OCI-LY7 (cell line): ENCODE measurements at regions of chr12 and their contacts with region 1.

Region 1: DNA sequence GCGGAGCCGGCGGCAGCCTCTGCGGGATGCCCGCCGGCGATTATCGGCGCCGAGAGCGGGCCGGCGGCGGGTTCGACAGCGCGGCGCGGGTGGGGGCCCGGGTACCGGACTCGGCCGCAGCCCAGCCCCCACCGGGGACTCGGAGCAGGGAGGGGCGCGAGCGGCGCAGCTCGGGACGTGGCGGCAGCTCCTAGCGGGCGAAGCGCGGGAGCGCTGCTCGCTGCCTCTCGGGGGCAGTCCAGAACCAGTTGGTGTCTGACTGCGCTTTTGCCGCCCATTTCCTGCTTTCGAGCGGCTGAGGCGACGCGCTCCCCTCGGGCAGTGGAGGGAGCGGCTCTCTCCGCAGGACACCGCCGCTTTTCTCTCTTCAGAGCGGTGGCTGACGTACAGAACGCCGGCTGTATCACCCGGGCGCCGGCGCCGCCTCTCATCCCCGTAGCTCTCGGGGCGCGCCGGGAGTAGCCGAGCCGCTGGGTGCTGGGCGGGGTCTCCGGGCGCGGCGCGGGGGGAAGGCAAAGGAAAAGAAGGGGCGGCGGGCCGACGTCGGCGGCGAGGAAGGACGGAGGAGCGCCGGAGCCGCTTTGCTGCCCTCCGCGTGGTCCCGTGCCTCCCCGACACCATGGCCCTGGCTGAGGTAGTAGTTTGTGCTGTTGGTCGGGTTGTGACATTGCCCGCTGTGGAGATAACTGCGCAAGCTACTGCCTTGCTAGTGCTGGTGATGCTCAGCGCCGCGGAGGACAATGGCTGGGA is 136.6 kb downstream of the MON2 start:
- DNase-seq: peak; percentile 94
- H3K4me3 ChIP-seq: peak overlapping the region; percentile 88
- H3K27ac ChIP-seq: peak overlapping the region; percentile 97
- H3K4me1 ChIP-seq: peaks cover 31% of the 10 kb centered on the region
- CTCF ChIP-seq: peak; percentile 54; the same call in 1 of the 2 replicates

Region 2: DNA sequence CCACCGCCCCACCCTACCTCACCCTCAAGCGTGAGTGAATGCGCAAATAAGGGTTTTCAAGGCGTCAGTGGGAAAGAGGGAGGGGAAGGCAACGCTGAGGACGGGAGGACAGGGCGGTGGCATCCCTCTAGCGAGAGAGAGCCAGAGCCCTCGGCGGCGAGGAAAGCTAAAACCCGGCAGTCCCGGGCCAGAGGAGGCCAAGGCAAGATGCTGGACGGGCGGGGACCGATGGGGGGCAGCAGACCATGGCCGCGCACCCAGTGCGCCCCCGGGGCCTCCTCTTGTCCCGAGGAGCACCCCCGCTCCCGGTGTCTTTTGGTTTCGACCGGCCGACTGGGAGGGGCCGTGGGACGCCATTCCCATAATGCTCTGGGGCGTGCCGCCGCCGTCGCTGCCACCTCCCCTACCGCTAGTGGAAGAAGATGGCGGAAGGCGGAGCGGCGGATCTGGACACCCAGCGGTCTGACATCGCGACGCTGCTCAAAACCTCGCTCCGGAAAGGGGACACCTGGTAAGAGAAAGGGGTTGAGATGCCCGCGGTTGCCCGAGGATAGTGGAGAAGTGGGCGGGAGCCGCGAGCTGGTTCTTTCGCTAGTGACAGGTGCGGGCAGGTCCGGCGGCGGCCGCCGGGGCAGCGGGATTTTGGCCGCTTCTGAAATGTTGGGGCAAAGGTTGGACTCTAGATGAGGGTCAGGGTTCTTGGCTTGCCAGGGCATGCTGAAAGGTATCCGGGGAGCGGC is 343.1 kb before region 1 on chr12 and contains the start of gene USP15:
- CTCF ChIA-PET with region 1: no interaction called
- POLR2A ChIA-PET with region 1: no interaction called
- intact Hi-C with region 1: loop called (anchors 1 kb)
- DNase-seq: peak; percentile 98
- H3K4me3 ChIP-seq: peak within 1 kb of the TSS; percentile 92
- H3K27ac ChIP-seq: peak within 1 kb of the TSS; percentile 90
- H3K4me1 ChIP-seq: peaks cover 41% of the 10 kb centered on the region
- CTCF ChIP-seq: peak; percentile 65
- total RNA-seq, gene USP15: 43.3 and 65.7 TPM in 2 replicates

Region 3: DNA sequence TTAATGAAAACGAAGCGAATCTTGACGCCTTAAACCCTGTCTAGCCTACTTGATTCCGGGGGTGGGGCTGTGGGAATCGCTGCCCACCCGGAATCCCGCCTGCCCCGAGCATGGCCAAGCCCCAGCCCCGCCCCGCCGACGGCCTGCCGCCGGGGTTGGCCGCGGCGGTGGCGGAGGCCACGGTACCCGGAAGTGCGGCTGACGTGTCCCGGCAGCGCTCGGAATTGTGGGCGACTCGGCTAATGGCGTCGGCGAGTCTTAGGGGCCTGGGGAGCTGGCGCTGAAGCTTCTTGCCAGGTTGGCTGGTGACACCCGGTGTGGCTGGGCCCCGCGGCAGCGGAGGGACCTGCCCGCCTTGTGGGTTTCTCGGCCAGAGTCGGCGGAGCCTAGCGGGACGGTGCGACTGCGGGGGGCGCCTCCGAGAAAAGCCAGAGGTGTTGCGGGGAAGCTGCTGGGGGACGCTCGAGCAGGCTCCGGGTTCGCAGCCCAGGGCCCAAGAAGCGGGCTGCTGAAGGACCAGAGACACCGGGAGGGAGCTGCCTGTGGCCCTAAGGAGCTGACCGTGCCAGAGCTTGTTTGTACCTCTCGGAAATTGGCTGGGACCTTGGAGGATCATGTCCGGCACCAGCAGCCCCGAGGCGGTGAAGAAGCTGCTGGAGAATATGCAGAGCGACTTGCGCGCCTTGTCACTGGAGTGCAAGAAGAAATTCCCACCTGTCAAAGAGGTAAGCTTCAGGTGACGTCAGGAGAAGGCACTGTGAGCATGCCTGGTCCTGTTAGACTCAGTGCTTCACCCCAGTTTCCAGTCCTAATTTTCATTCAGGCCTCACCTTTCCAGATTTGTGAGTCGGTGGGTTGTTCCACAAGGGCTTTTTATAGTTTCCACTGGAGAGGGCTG is 136.4 kb before region 1 on chr12 and contains the start of gene MON2:
- CTCF ChIA-PET with region 1: no interaction called
- POLR2A ChIA-PET with region 1: interaction called, 10 read pairs
- intact Hi-C with region 1: loop called (anchors 10 kb)
- DNase-seq: peak; percentile 89
- H3K4me3 ChIP-seq: peak within 1 kb of the TSS; percentile 99
- H3K27ac ChIP-seq: peak within 1 kb of the TSS; percentile 71
- H3K4me1 ChIP-seq: peaks cover 19% of the 10 kb centered on the region
- CTCF ChIP-seq: 0 out of 2 replicates have a peak, but pooled peaks have one; percentile 12
- total RNA-seq, gene MON2: 26.6 and 31.6 TPM in 2 replicates

Region 4: GRCh38 chr12:62588916-62589315 is 14.3 kb before region 1 on chr12:
- CTCF ChIA-PET with region 1: interaction called, 7 read pairs
- POLR2A ChIA-PET with region 1: interaction called, 22 read pairs
- intact Hi-C with region 1: no loop called
- DNase-seq: no peak
- H3K4me3 ChIP-seq: no peak overlapping the region
- H3K27ac ChIP-seq: no peak overlapping the region
- H3K4me1 ChIP-seq: no peaks in the 10 kb centered on the region
- CTCF ChIP-seq: no peak

Region 5: GRCh38 chr12:62793256-62794217 is 190.3 kb after region 1 on chr12:
- CTCF ChIA-PET with region 1: no interaction called
- POLR2A ChIA-PET with region 1: interaction called, 3 read pairs
- intact Hi-C with region 1: loop called (anchors 5 kb)
- DNase-seq: peak; percentile 64
- H3K4me3 ChIP-seq: no peak overlapping the region
- H3K27ac ChIP-seq: no peak overlapping the region
- H3K4me1 ChIP-seq: no peaks in the 10 kb centered on the region
- CTCF ChIP-seq: peak; percentile 95